Posterior vena cava (tissue), 2 donors: ENCODE measurements at regions of chr2 and their contacts with region 1.

Region 1: DNA sequence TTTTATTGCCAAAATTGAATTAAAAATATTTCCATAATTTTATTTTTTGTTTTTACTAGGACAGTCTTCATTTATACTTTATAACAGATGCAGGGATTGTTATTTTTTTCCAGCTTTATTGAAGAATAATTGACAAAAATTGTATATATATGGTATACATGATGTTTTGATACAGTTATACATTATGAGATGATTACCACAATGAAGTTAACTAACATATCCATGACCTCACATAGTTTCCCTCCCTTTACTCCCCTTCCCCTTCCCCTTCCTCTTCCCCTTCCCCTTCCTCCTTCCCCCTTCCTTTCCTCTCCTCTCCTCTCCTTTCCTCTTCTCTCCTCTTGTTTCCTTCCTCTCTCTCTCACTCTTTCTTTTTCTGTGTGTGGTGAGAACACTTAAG is 700.1 kb downstream of the CNTNAP5 start:
- DNase-seq: no peak

Region 2: DNA sequence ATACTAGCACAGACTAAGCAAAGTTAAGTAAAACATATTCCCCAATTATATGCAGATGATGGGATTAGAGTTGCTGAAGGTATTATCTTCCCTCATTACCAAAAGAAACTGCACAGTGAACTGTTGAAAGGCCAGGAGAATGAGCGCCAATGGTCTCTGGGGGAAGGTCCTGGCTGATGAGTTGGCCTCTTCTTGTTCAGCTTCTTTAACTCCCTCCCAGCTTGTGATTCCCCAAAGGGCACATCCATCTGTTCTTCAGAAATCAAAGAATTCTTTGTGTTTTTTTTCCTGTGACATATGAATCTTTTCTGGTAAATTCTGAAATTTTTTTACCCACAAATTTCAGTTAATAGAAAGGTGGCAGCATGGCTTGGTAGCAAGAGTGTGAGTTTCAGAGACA is 32.5 kb before region 1 on chr2:
- intact Hi-C with region 1: loop called in 1 of 2 experiments (anchors 1 kb)
- DNase-seq: no peak

Region 3: DNA sequence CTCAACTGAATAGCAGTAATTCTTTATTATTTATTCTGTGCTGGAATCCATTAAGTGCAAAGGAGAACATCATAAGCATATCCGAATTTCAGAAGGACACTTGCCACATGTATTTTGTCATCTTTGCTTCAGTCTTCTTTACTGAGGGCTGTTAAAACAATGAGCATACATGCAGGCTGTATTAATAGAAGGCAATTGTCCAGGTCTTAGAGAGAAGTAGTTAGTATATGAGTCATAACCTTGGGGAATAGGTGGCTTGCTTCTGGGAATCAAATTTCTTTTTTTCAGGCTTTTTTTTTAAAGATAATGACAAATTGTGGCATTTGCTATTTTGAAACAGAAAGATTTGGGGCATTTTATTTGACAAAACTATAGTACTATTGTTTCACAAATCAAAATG is 73.4 kb after region 1 on chr2:
- intact Hi-C with region 1: no loop called
- DNase-seq: no peak